ENCODE measurements at regions of chr16 and their contacts with region 1.

Region 1: GRCh38 chr16:2520092-2520783 is at the start of gene AMDHD2:
- DNase-seq: peak; percentile 92
- H3K4me3 Mint-ChIP-seq: peak within 1 kb of the TSS; percentile 82
- H3K27ac Mint-ChIP-seq: peak within 1 kb of the TSS; percentile 77
- H3K4me1 Mint-ChIP-seq: peaks cover 51% of the 10 kb centered on the region
- H3K27me3 Mint-ChIP-seq: no peaks in the 10 kb centered on the region
- total RNA-seq, gene AMDHD2: 15.3 to 18.6 TPM

Region 2: DNA sequence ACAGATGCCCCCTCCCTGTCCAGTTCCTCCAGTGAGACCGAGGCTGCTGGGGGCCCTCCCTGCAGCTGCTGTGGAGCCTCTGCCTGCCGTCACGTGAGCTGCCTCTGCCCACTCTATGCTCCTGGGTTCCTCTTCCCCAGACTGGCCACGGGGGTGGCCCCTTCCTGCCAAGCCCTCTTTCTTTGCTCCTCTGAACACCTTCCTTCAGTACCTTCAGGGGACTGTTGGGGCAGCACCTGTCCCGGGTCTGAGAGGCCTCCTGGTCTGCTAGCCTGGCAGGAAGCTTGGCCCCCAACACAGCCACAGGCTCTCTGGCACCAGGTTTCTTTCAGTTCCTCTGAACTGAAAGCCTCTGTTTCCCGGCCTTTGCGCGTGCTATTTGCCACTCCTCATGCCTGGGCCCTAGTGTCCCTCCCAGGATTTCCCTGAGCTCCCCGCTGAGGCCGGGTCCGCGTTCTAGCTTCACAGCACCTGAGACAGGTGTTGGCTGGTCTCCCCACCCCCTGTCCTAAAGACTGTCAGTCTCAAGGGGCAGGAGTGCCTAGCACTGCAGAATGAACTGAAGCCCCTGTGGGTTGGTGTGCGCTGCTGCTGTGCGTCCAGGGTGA is 13.1 kb before region 1 on chr16:
- CTCF ChIA-PET with region 1: no interaction called
- intact Hi-C with region 1: no loop called
- DNase-seq: no peak
- H3K4me3 Mint-ChIP-seq: no peak overlapping the region
- H3K27ac Mint-ChIP-seq: no peak overlapping the region
- H3K4me1 Mint-ChIP-seq: no peaks in the 10 kb centered on the region
- H3K27me3 Mint-ChIP-seq: no peaks in the 10 kb centered on the region

Region 3: DNA sequence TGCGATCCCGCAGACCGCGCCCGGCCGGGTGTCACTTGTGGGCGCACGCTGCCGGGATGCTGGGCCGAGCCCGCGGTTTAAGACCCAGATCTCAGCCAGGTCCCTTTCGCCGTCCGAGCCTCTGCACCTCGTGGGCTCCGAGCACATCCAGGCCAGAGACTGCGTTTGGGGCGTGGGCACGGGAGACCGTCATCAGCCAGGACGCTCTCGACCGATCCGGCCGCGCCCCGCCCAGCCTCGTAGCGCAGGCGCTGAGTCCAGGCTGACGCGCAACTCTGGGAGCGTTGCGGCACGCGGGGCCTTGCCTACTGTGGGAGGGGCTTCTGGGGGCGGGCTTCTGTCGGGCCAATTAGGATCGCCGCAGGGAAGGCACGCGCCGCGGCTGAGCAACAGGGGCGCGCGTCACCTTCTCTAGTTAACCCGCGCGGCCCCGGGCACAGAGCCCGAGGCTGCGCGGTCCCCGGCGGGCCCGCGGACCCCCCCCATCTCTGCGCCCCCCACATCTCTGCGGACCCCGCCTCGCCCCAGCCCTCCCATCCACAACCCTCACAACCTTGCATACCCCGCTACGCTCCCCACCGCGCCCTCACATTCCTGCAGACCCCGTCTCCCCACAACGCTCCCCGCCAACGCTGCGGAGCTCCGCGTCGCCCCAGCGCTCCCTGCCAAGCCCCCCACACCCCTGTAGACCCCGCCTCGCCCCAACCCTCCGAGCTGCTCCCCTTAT is 11.7 kb after region 1 on chr16:
- CTCF ChIA-PET with region 1: interaction called, 4 read pairs
- intact Hi-C with region 1: loop called (anchors 1 kb)
- DNase-seq: peak; percentile 99
- H3K4me3 Mint-ChIP-seq: peak overlapping the region; percentile 92
- H3K27ac Mint-ChIP-seq: peak overlapping the region; percentile 97
- H3K4me1 Mint-ChIP-seq: peaks cover 16% of the 10 kb centered on the region
- H3K27me3 Mint-ChIP-seq: no peaks in the 10 kb centered on the region

Region 4: DNA sequence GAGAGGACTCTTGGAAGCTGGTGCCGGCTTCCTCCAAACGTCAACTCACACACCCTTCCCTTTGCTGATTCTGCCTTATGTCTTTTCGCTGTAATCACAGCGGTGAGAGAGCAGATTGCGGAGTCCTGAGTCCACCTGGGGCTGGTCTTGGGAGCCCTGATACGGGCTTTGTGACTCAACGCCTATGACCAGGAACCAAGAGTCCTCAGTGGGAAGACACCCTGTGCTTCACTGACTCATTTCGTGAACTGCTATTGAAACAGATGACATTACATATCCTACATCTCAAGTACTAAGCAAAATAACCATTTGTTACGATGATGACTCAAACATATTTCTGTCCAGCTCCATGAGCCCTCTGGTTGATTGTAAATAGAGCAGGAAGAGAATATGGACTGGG is 1451.0 kb after region 1 on chr16:
- CTCF ChIA-PET with region 1: no interaction called
- intact Hi-C with region 1: no loop called
- DNase-seq: no peak
- H3K4me3 Mint-ChIP-seq: no peak overlapping the region
- H3K27ac Mint-ChIP-seq: no peak overlapping the region
- H3K4me1 Mint-ChIP-seq: no peaks in the 10 kb centered on the region
- H3K27me3 Mint-ChIP-seq: no peaks in the 10 kb centered on the region